ENCODE measurements at regions of chr2 and their contacts with region 1.

Region 1: GRCh38 chr2:101831351-101831865 is 133.9 kb downstream of the MAP4K4 start:
- DNase-seq: peak; percentile 60

Region 2: DNA sequence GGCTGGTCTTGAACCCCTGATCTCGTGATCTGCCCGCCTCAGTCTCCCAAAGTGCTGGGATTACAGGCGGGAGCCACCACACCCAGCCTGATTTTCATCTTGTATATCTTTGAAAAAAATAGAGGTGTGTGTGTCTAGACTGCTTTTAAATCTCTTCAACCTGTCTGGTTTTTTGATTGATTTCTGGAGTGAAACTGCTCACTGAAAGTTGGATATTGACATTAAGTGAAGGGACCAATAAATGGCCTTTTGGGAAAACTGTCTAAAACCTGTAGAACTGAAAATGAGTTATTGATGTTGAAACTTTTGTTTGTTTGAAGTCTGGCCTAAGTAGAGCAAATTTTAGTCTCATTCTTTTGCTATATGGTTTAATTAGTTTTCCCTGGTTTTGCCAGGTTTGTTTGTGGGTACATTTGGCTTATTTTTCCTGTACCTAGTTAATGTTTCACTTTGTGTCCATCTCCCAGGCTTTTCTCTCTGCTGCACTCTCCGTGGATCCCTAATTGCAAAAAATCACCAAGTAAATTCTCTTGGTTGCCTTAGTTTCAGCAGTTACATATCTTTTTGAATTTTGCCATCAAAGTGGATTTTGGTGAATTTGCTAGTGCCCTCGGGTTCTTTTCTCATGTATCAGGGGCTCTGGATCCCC is 10.4 kb after region 1 on chr2:
- CTCF ChIA-PET with region 1: interaction called, 10 read pairs
- POLR2A ChIA-PET with region 1: no interaction called
- DNase-seq: no peak